ENCODE measurements at regions of chr18 and their contacts with region 1.

Region 1: GRCh38 chr18:69757733-69758132 is 189.9 kb downstream of the CD226 start:
- DNase-seq: no peak
- ATAC-seq: no peak
- H3K4me3 ChIP-seq: no peak overlapping the region
- H3K27ac ChIP-seq: no peak overlapping the region
- H3K4me1 ChIP-seq: peaks cover 48% of the 10 kb centered on the region
- H3K27me3 ChIP-seq: no peaks in the 10 kb centered on the region
- CTCF ChIP-seq: no peak
- EP300 ChIP-seq: no peak
- POLR2A ChIP-seq: no peak
- RAD21 ChIP-seq: no peak

Region 2: DNA sequence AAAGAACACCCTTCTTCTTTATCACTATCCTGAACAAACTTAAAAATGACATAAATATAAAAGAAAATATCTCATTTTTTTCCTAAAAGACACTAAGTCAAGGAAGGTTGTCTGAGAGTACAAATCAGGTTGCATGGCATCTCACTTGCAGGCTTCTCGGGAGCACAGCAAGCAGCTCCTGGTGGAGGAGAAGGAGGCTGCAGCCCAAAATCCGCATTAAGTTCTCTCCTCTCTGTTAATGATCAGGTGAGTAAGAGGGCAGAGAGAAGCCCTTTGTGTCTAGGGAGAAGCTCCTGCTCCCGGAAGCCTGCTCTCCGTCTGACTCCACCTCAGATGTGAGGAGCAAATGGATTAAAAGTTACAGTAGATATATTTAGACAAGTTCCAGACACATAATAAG is 392.1 kb before region 1 on chr18:
- CTCF ChIA-PET with region 1: no interaction called
- POLR2A ChIA-PET with region 1: no interaction called
- in situ Hi-C with region 1: loop called (anchors 25 kb)
- intact Hi-C with region 1: no loop called
- DNase-seq: no peak
- ATAC-seq: peak; percentile 66
- H3K4me3 ChIP-seq: no peak overlapping the region
- H3K27ac ChIP-seq: no peak overlapping the region
- H3K4me1 ChIP-seq: peaks cover 56% of the 10 kb centered on the region
- H3K27me3 ChIP-seq: no peaks in the 10 kb centered on the region
- CTCF ChIP-seq: no peak
- EP300 ChIP-seq: no peak
- POLR2A ChIP-seq: no peak
- RAD21 ChIP-seq: no peak

Region 3: GRCh38 chr18:69787825-69788547 is 30.3 kb after region 1 on chr18:
- CTCF ChIA-PET with region 1: no interaction called
- POLR2A ChIA-PET with region 1: no interaction called
- in situ Hi-C with region 1: loop called (anchors 5 kb)
- intact Hi-C with region 1: loop called (anchors 1 kb)
- DNase-seq: peak; percentile 67
- ATAC-seq: no peak
- H3K4me3 ChIP-seq: no peak overlapping the region
- H3K27ac ChIP-seq: peak overlapping the region; percentile 47
- H3K4me1 ChIP-seq: peaks cover 44% of the 10 kb centered on the region
- H3K27me3 ChIP-seq: no peaks in the 10 kb centered on the region
- CTCF ChIP-seq: no peak
- EP300 ChIP-seq: peak in 1 of 2 experiments; percentile 63; a peak in 2 of 4 replicates
- POLR2A ChIP-seq: no peak
- RAD21 ChIP-seq: no peak

Region 4: GRCh38 chr18:69820538-69820937 is 62.8 kb after region 1 on chr18:
- CTCF ChIA-PET with region 1: no interaction called
- POLR2A ChIA-PET with region 1: no interaction called
- in situ Hi-C with region 1: no loop called
- intact Hi-C with region 1: loop called (anchors 10 kb)
- DNase-seq: no peak
- ATAC-seq: no peak
- H3K4me3 ChIP-seq: no peak overlapping the region
- H3K27ac ChIP-seq: no peak overlapping the region
- H3K4me1 ChIP-seq: peaks cover 12% of the 10 kb centered on the region; the same call in 1 of the 2 replicates
- H3K27me3 ChIP-seq: no peaks in the 10 kb centered on the region
- CTCF ChIP-seq: no peak
- EP300 ChIP-seq: no peak
- POLR2A ChIP-seq: no peak
- RAD21 ChIP-seq: no peak

Region 5: DNA sequence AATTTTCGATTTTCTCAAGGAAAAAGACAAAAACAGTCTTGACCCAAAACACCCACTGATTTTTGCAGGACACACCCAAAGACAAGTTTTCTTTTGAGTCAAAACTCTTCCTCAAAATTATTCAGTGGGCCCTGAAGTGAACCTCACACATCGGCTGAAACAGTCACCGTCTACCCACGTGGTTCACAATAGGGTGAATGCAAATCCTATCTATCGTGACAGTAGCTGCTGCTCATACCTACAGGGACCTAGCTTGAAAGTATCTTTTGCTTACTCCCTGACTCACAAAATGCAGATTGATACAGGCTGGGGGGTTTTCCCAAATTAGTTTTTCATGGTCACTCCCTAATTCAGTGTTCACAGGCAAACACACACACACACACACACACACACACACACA is 200.7 kb after region 1 on chr18:
- CTCF ChIA-PET with region 1: no interaction called
- POLR2A ChIA-PET with region 1: no interaction called
- in situ Hi-C with region 1: no loop called
- intact Hi-C with region 1: no loop called
- DNase-seq: no peak
- ATAC-seq: no peak
- H3K4me3 ChIP-seq: no peak overlapping the region
- H3K27ac ChIP-seq: no peak overlapping the region
- H3K4me1 ChIP-seq: peaks cover 8% of the 10 kb centered on the region; the same call in 1 of the 2 replicates
- H3K27me3 ChIP-seq: no peaks in the 10 kb centered on the region
- CTCF ChIP-seq: no peak
- EP300 ChIP-seq: no peak
- POLR2A ChIP-seq: no peak
- RAD21 ChIP-seq: no peak